Breast epithelium (tissue), 4 donors: ENCODE measurements at regions of chr1 and their contacts with region 1.

Region 1: GRCh38 chr1:114561333-114561732 is 20.1 kb downstream of the BCAS2 start:
- DNase-seq: no peak
- H3K4me3 ChIP-seq: no peak overlapping the region
- H3K27ac ChIP-seq: no peak overlapping the region
- H3K4me1 ChIP-seq: no peaks in the 10 kb centered on the region
- H3K27me3 ChIP-seq: no peaks in the 10 kb centered on the region
- CTCF ChIP-seq: no peak
- POLR2A ChIP-seq: no peak

Region 2: DNA sequence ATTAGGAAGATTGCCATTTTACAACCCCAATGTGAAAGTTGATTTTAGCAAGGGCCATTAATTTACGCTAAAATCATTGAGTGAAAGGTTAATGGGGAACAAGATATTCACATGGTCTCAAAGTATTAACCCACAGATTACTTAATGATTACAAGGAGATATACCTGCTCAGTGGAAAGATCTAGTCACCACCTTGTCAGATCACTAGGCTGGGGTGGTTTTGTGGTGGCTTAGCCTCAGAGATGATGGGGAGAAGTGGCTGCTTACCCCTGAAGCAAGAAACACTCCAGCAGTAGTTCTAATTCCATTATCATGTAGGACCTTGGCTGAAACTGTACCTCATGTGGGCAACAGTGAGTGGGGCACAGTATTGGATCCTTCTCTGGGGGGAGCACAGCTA is 30.2 kb before region 1 on chr1:
- intact Hi-C with region 1: loop called (anchors 2 kb)
- DNase-seq: no peak
- H3K4me3 ChIP-seq: no peak overlapping the region
- H3K27ac ChIP-seq: no peak overlapping the region
- H3K4me1 ChIP-seq: no peaks in the 10 kb centered on the region
- H3K27me3 ChIP-seq: no peaks in the 10 kb centered on the region
- CTCF ChIP-seq: no peak
- POLR2A ChIP-seq: no peak